ENCODE measurements at regions of chr15 and their contacts with region 1.

Region 1: DNA sequence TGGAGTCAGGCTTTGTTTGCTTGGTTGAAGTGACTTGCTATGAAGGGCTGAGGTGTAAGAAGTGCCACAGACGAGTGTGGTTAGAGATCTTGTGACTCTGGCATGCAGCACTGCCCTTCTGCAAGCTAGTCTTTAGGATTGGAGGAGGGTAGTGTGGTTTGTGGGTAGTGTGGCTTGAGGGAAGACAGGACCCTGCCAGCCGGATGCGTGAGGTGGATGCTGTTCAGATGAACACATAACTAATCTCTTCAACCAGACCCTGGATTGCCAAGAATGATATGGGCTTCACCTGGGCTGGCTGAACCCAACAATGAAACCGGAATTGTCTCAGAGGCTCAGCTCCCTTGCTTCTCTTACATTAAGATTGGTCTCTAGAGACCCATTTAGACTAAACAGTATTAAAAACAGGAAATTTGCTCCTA is 32.7 kb downstream of the STARD9 start:
- DNase-seq: peak in 5 of 9 donors; percentile 7 to 51 (median 9)
- ATAC-seq: peak; percentile 85
- H3K4me3 ChIP-seq: no peak overlapping the region
- H3K4me3 Mint-ChIP-seq: peak overlapping the region; percentile 35 to 85 (median 71)
- H3K27ac ChIP-seq: no peak overlapping the region
- H3K27ac Mint-ChIP-seq: peak overlapping the region; percentile 11 to 83 (median 64)
- H3K4me1 ChIP-seq: peaks cover 14 to 38% of the 10 kb centered on the region in 2 donors
- H3K4me1 Mint-ChIP-seq: peaks cover 38 to 62% (median 48%) of the 10 kb centered on the region in 7 donors
- H3K27me3 ChIP-seq: no peaks in the 10 kb centered on the region
- H3K27me3 Mint-ChIP-seq: no peaks in the 10 kb centered on the region

Region 2: GRCh38 chr15:42499868-42500609 is 108.1 kb before region 1 on chr15:
- CTCF ChIA-PET with region 1: no interaction called
- POLR2A ChIA-PET with region 1: no interaction called
- intact Hi-C with region 1: no loop called
- DNase-seq: no peak
- ATAC-seq: no peak
- H3K4me3 ChIP-seq: no peak overlapping the region
- H3K4me3 Mint-ChIP-seq: no peak overlapping the region
- H3K27ac ChIP-seq: no peak overlapping the region
- H3K27ac Mint-ChIP-seq: peak overlapping the region in 4 of 9 donors; percentile 10 to 50 (median 43)
- H3K4me1 ChIP-seq: peaks cover under 1 to 4% of the 10 kb centered on the region in 2 donors
- H3K4me1 Mint-ChIP-seq: peaks cover 29 to 69% (median 59%) of the 10 kb centered on the region in 7 donors
- H3K27me3 ChIP-seq: no peaks in the 10 kb centered on the region
- H3K27me3 Mint-ChIP-seq: no peaks in the 10 kb centered on the region

Region 3: GRCh38 chr15:42548253-42549031 is 59.7 kb before region 1 on chr15 and contains the starts of genes HAUS2 and LRRC57:
- CTCF ChIA-PET with region 1: no interaction called
- POLR2A ChIA-PET with region 1: no interaction called
- intact Hi-C with region 1: loop called in 1 of 2 experiments (anchors 10 kb)
- DNase-seq: peak; percentile 79 to 93 (median 86)
- ATAC-seq: peak; percentile 89
- H3K4me3 ChIP-seq: peak within 1 kb of the TSS; percentile 86
- H3K4me3 Mint-ChIP-seq: peak within 1 kb of the TSS; percentile 93 to 99 (median 96)
- H3K27ac ChIP-seq: peak within 1 kb of the TSS; percentile 93
- H3K27ac Mint-ChIP-seq: peak within 1 kb of the TSS; percentile 95 to 99 (median 97)
- H3K4me1 ChIP-seq: peaks cover 21 to 23% of the 10 kb centered on the region in 2 donors
- H3K4me1 Mint-ChIP-seq: peaks cover 29 to 62% (median 51%) of the 10 kb centered on the region in 7 donors
- H3K27me3 ChIP-seq: no peaks in the 10 kb centered on the region
- H3K27me3 Mint-ChIP-seq: no peaks in the 10 kb centered on the region
- total RNA-seq, gene HAUS2: 12.0 to 35.4 (median 16.8) TPM
- total RNA-seq, gene LRRC57: 15.4 to 37.1 (median 18.0) TPM

Region 4: GRCh38 chr15:42575188-42576039 is 32.7 kb before region 1 on chr15 and contains the start of gene STARD9:
- CTCF ChIA-PET with region 1: no interaction called
- POLR2A ChIA-PET with region 1: interaction called, 21 read pairs
- intact Hi-C with region 1: loop called (anchors 1 to 2 kb)
- DNase-seq: peak; percentile 84 to 96 (median 93)
- ATAC-seq: peak; percentile 96
- H3K4me3 ChIP-seq: peak within 1 kb of the TSS; percentile 81
- H3K4me3 Mint-ChIP-seq: peak within 1 kb of the TSS; percentile 74 to 95 (median 92)
- H3K27ac ChIP-seq: peak within 1 kb of the TSS; percentile 58
- H3K27ac Mint-ChIP-seq: peak within 1 kb of the TSS; percentile 10 to 84 (median 76)
- H3K4me1 ChIP-seq: peaks cover 7 to 12% of the 10 kb centered on the region in 2 donors
- H3K4me1 Mint-ChIP-seq: peaks cover 14 to 36% (median 19%) of the 10 kb centered on the region in 7 donors
- H3K27me3 ChIP-seq: no peaks in the 10 kb centered on the region
- H3K27me3 Mint-ChIP-seq: peaks cover 6 to 35% (median 13%) of the 10 kb centered on the region in 5 donors
- total RNA-seq, gene STARD9: 2.4 to 10.5 (median 4.5) TPM

Region 5: GRCh38 chr15:42581272-42581730 is 26.8 kb before region 1 on chr15:
- CTCF ChIA-PET with region 1: interaction called, 3 read pairs
- POLR2A ChIA-PET with region 1: interaction called, 21 read pairs
- intact Hi-C with region 1: loop called (anchors 1 to 2 kb)
- DNase-seq: peak; percentile 63 to 80 (median 77)
- ATAC-seq: peak; percentile 98
- H3K4me3 ChIP-seq: peak overlapping the region; percentile 33
- H3K4me3 Mint-ChIP-seq: peak overlapping the region; percentile 85 to 96 (median 90)
- H3K27ac ChIP-seq: peak overlapping the region; percentile 71
- H3K27ac Mint-ChIP-seq: peak overlapping the region; percentile 77 to 97 (median 89)
- H3K4me1 ChIP-seq: peaks cover 8 to 11% of the 10 kb centered on the region in 2 donors
- H3K4me1 Mint-ChIP-seq: peaks cover 20 to 51% (median 37%) of the 10 kb centered on the region in 7 donors
- H3K27me3 ChIP-seq: no peaks in the 10 kb centered on the region
- H3K27me3 Mint-ChIP-seq: peaks cover 4 to 32% (median 10%) of the 10 kb centered on the region in 5 donors

Region 6: GRCh38 chr15:42632105-42632675 is 24.1 kb after region 1 on chr15:
- CTCF ChIA-PET with region 1: no interaction called
- POLR2A ChIA-PET with region 1: no interaction called
- intact Hi-C with region 1: no loop called
- DNase-seq: no peak
- ATAC-seq: no peak
- H3K4me3 ChIP-seq: no peak overlapping the region
- H3K4me3 Mint-ChIP-seq: no peak overlapping the region
- H3K27ac ChIP-seq: no peak overlapping the region
- H3K27ac Mint-ChIP-seq: no peak overlapping the region
- H3K4me1 ChIP-seq: no peaks in the 10 kb centered on the region
- H3K4me1 Mint-ChIP-seq: peaks cover 0 to 8% (median 0%) of the 10 kb centered on the region in 7 donors
- H3K27me3 ChIP-seq: no peaks in the 10 kb centered on the region
- H3K27me3 Mint-ChIP-seq: no peaks in the 10 kb centered on the region

Region 7: DNA sequence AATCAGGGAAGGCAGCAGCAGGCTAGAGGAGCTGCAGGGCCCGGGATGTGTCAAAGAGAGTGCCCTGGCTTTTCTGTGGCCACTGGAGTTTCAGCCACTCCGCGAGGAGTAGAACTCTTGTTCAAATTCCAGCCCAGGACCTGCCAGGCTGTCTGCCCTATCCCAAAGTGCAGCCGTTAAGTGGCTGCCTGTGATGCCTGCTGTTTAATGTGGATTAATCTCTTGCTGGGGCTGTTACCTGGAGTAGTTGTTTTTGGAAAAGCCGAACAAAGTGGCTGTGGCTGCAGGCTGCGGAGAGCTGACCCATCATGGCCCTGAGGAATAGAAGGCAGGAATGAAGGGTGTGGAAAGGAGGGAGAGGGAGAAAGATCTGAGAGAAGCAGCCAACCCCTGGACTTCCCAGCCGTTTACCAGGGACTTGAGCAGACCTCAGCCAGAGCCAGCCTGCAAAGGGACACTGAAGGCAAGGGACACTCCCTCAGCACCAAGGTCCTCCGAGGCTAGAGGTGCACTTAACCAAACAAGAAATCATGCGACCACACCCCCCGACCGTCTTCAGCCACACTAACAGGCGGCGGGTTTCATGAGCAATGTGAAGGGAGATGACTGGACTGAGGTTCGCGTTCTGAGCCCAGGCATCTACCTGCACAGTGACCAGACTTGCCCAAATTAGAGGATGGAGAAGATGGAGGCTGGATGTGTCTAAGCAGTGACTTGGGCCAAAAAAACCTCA is 124.1 kb after region 1 on chr15:
- CTCF ChIA-PET with region 1: no interaction called
- POLR2A ChIA-PET with region 1: no interaction called
- intact Hi-C with region 1: no loop called
- DNase-seq: no peak
- ATAC-seq: no peak
- H3K4me3 ChIP-seq: no peak overlapping the region
- H3K4me3 Mint-ChIP-seq: peak overlapping the region in 1 of 10 donors; percentile 41
- H3K27ac ChIP-seq: no peak overlapping the region
- H3K27ac Mint-ChIP-seq: peak overlapping the region in 3 of 9 donors; percentile 19 to 47 (median 28)
- H3K4me1 ChIP-seq: peaks cover 5 to 6% of the 10 kb centered on the region in 2 donors
- H3K4me1 Mint-ChIP-seq: peaks cover 10 to 22% (median 16%) of the 10 kb centered on the region in 7 donors
- H3K27me3 ChIP-seq: no peaks in the 10 kb centered on the region
- H3K27me3 Mint-ChIP-seq: no peaks in the 10 kb centered on the region

Region 8: DNA sequence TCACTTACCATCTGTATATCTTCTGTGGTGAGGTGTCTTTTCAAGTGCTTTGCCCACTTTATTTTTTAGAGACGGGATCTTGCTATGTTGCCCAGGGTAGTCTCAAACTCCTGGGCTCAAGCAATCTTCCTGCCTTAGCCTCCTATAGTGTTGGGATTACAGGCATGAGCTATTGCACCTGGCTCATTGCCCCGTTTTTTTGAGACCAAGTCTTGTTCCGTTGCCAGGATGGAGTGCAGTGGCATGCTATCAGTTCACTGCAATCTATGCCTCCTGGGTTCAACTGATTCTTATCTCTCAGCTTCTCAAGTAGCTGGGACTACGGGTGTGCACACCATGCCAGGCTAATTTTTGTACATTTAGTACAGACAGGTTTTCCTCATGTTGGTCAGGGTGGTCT is 365.0 kb after region 1 on chr15:
- CTCF ChIA-PET with region 1: no interaction called
- POLR2A ChIA-PET with region 1: no interaction called
- intact Hi-C with region 1: no loop called
- DNase-seq: no peak
- ATAC-seq: no peak
- H3K4me3 ChIP-seq: no peak overlapping the region
- H3K4me3 Mint-ChIP-seq: no peak overlapping the region
- H3K27ac ChIP-seq: no peak overlapping the region
- H3K27ac Mint-ChIP-seq: no peak overlapping the region
- H3K4me1 ChIP-seq: no peaks in the 10 kb centered on the region
- H3K4me1 Mint-ChIP-seq: no peaks in the 10 kb centered on the region
- H3K27me3 ChIP-seq: no peaks in the 10 kb centered on the region
- H3K27me3 Mint-ChIP-seq: no peaks in the 10 kb centered on the region